Esophagus squamous epithelium (tissue), 5 donors: ENCODE measurements at regions of chr3 and their contacts with region 1.

Region 1: DNA sequence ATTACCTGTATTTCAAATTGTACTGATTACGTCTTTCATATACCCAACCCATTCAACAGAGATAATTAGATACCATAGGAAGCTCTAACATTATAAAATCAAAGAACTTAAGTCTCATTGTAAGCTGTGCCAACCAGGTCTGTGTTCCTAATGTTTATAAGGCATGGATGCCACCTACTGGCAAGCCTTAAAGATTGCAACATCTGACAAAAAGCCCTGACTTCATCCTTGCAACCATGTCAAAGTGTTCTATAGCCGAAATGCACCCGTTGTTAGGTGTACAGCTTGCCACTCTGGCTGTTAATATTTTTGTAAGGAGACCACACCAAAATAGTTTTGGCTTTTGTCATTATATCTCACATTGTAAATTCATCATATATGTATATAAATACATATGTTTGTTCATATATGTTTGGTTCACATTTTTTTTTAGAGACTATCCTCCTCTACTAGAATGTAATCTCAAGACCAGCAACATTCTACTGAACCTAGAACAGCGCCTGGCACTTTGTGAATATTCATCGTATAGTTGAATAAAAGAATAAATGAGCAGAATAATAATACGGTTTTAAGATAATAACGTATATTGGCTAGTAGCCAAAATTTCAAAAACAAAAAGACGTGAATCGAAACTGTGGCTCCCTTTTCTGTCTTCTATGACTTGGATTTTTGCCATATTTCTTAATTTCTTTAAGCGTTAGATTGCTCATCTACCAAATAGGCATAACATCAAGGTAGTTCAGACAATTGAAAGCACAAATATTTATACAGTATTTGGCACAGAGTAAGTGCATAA is 258.1 kb downstream of the TBL1XR1 start:
- DNase-seq: no peak
- H3K4me3 ChIP-seq: no peak overlapping the region
- H3K27ac ChIP-seq: no peak overlapping the region
- H3K4me1 ChIP-seq: peaks cover 0 to 19% (median 0%) of the 10 kb centered on the region in 3 donors
- H3K27me3 ChIP-seq: no peaks in the 10 kb centered on the region
- CTCF ChIP-seq: peak in 5 of 6 experiments; percentile 64 to 87 (median 69)
- POLR2A ChIP-seq: no peak

Region 2: GRCh38 chr3:176663837-176664831 is 275.1 kb before region 1 on chr3:
- intact Hi-C with region 1: no loop called
- DNase-seq: no peak
- H3K4me3 ChIP-seq: no peak overlapping the region
- H3K27ac ChIP-seq: no peak overlapping the region
- H3K4me1 ChIP-seq: no peaks in the 10 kb centered on the region
- H3K27me3 ChIP-seq: no peaks in the 10 kb centered on the region
- CTCF ChIP-seq: peak in 1 of 6 experiments; percentile 34
- POLR2A ChIP-seq: no peak

Region 3: GRCh38 chr3:176872771-176873209 is 66.4 kb before region 1 on chr3:
- intact Hi-C with region 1: loop called (anchors 10 kb)
- DNase-seq: no peak
- H3K4me3 ChIP-seq: no peak overlapping the region
- H3K27ac ChIP-seq: no peak overlapping the region
- H3K4me1 ChIP-seq: peaks cover 0 to 10% (median 4%) of the 10 kb centered on the region in 3 donors
- H3K27me3 ChIP-seq: no peaks in the 10 kb centered on the region
- CTCF ChIP-seq: peak; percentile 44 to 84 (median 66)
- POLR2A ChIP-seq: no peak